ENCODE measurements at regions of chr1 and their contacts with region 1.

Region 1: DNA sequence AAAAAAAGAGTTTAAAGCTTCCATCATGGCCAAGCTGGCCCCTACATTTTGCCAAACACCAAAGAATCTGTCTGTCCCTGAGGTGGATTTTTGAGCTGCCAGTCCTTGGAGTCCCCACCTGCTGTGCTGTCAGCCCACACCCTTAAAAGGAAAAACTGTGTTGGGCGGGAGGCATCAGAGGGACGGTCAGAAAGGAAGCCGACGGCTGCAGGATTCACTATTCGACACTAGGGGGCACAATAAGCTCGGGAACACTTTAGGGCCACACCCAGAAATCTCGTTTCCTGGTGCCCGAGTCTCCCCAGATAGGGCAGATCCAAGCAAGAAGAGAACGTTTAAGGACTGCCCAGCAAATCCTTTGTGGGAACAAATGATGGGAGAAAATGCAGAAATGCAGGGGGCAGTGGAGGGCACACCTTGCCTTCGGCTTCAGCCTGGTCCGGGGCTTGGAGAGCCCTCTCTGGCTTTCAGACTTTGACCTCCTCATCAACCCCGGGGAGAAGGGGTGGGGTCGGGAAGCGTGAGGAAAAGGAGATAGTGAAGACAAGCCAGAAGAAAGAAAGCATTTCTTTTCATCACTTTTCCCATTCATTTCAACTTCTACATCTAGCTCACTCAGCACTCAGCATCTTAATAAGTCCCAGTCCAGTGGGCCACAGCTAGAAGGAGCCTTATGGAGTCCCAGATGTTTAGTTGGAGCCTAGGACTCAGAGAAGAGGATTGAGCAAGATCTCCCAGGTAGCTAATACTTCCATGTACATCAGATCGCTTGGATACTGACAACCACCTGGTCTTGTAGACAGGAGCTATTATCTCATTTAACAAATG is 5.0 kb upstream of the CTTNBP2NL start:
- DNase-seq: peak; percentile 63
- ATAC-seq: peak; percentile 81
- H3K4me3 ChIP-seq: peak overlapping the region; percentile 79
- H3K27ac ChIP-seq: no peak overlapping the region
- H3K4me1 ChIP-seq: peaks cover 18% of the 10 kb centered on the region
- H3K27me3 ChIP-seq: no peaks in the 10 kb centered on the region
- CTCF ChIP-seq: peak; percentile 88 to 96 (median 95)
- EP300 ChIP-seq: no peak
- POLR2A ChIP-seq: no peak
- RAD21 ChIP-seq: peak; percentile 94

Region 2: GRCh38 chr1:112369392-112370285 is 21.4 kb before region 1 on chr1:
- CTCF ChIA-PET with region 1: interaction called, 24 read pairs
- POLR2A ChIA-PET with region 1: interaction called, 4 read pairs
- RAD21 ChIA-PET with region 1: interaction called, 6 read pairs
- SMC1A ChIA-PET with region 1: interaction called, 3 read pairs
- in situ Hi-C with region 1: no loop called
- intact Hi-C with region 1: no loop called
- DNase-seq: no peak
- ATAC-seq: peak; percentile 100
- H3K4me3 ChIP-seq: no peak overlapping the region
- H3K27ac ChIP-seq: no peak overlapping the region
- H3K4me1 ChIP-seq: no peaks in the 10 kb centered on the region
- H3K27me3 ChIP-seq: no peaks in the 10 kb centered on the region; a peak in 2 of 4 replicates
- CTCF ChIP-seq: peak; percentile 96 to 99 (median 99); a peak in 5 of 6 replicates
- EP300 ChIP-seq: no peak
- POLR2A ChIP-seq: no peak
- RAD21 ChIP-seq: peak; percentile 80

Region 3: GRCh38 chr1:112429749-112430148 is 38.8 kb after region 1 on chr1:
- CTCF ChIA-PET with region 1: interaction called, 11 read pairs
- POLR2A ChIA-PET with region 1: no interaction called
- RAD21 ChIA-PET with region 1: interaction called, 3 read pairs
- SMC1A ChIA-PET with region 1: interaction called, 5 read pairs
- in situ Hi-C with region 1: no loop called
- intact Hi-C with region 1: no loop called
- DNase-seq: no peak
- ATAC-seq: no peak
- H3K4me3 ChIP-seq: no peak overlapping the region
- H3K27ac ChIP-seq: no peak overlapping the region
- H3K4me1 ChIP-seq: no peaks in the 10 kb centered on the region
- H3K27me3 ChIP-seq: no peaks in the 10 kb centered on the region
- CTCF ChIP-seq: no peak
- EP300 ChIP-seq: no peak
- POLR2A ChIP-seq: no peak
- RAD21 ChIP-seq: no peak

Region 4: GRCh38 chr1:112501810-112502641 is 111.0 kb after region 1 on chr1:
- CTCF ChIA-PET with region 1: interaction called, 25 read pairs
- POLR2A ChIA-PET with region 1: interaction called, 4 read pairs
- RAD21 ChIA-PET with region 1: interaction called, 25 read pairs
- SMC1A ChIA-PET with region 1: interaction called, 20 read pairs
- in situ Hi-C with region 1: no loop called
- intact Hi-C with region 1: no loop called
- DNase-seq: no peak
- ATAC-seq: peak; percentile 78
- H3K4me3 ChIP-seq: peak overlapping the region; percentile 50; the same call in 1 of the 2 replicates
- H3K27ac ChIP-seq: no peak overlapping the region
- H3K4me1 ChIP-seq: no peaks in the 10 kb centered on the region
- H3K27me3 ChIP-seq: peaks cover 3 to 5% of the 10 kb centered on the region in 2 experiments; a peak in 2 of 4 replicates
- CTCF ChIP-seq: peak; percentile 73 to 89 (median 77)
- EP300 ChIP-seq: no peak
- POLR2A ChIP-seq: no peak
- RAD21 ChIP-seq: peak; percentile 63

Region 5: DNA sequence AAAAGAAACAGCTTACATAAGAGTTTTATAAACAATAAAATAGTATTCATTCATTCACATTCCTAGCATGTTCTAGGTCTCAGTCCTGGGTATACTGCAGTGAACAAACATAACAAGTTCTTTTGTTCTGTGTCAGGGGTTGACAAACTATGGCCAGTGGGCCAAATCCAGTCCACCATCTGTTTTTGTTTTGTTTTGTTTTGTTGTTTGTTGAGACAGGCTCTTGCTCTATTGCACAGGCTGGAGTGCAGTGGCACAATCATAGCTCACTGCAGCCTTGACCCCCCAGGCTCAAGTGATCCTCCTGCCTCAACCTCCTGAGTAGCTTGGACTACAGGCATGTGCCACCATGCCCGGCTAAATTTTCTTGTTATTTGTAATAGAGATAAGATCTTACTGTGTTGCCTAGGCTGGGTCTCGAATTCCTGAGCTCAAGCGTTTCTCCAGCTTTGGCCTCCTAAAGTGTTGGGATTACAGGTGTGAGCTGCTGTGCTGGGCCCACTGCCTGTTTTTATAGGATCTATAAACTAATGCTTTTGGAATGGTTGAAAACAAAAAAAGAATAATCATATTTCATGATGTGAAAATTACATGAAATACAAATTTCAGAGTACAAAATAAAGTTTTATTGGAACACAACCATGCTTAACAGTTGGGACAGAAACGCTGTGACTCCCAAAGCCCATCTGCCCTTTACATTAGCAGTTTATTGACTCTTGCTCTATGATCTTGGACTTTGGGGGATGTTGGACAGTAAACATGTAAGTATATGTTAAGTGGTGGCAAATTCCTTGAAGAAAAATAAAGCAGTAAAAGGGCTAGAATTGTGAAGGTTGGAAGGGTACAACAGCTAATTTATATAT is 246.5 kb after region 1 on chr1:
- CTCF ChIA-PET with region 1: interaction called, 13 read pairs
- POLR2A ChIA-PET with region 1: no interaction called
- RAD21 ChIA-PET with region 1: interaction called, 7 read pairs
- SMC1A ChIA-PET with region 1: interaction called, 8 read pairs
- in situ Hi-C with region 1: no loop called
- intact Hi-C with region 1: no loop called
- DNase-seq: no peak
- ATAC-seq: no peak
- H3K4me3 ChIP-seq: no peak overlapping the region
- H3K27ac ChIP-seq: peak overlapping the region; percentile 48; the same call in 1 of the 2 replicates
- H3K4me1 ChIP-seq: peaks cover 27% of the 10 kb centered on the region
- H3K27me3 ChIP-seq: no peaks in the 10 kb centered on the region
- CTCF ChIP-seq: no peak
- EP300 ChIP-seq: no peak
- POLR2A ChIP-seq: no peak
- RAD21 ChIP-seq: no peak

Region 6: GRCh38 chr1:112803906-112804762 is 413.1 kb after region 1 on chr1:
- CTCF ChIA-PET with region 1: interaction called, 21 read pairs
- POLR2A ChIA-PET with region 1: no interaction called
- RAD21 ChIA-PET with region 1: interaction called, 8 read pairs
- SMC1A ChIA-PET with region 1: no interaction called
- in situ Hi-C with region 1: loop called (anchors 5 kb)
- intact Hi-C with region 1: loop called (anchors 2 kb)
- DNase-seq: peak; percentile 4
- ATAC-seq: peak; percentile 99
- H3K4me3 ChIP-seq: no peak overlapping the region
- H3K27ac ChIP-seq: no peak overlapping the region
- H3K4me1 ChIP-seq: peaks cover 4% of the 10 kb centered on the region; the same call in 1 of the 2 replicates
- H3K27me3 ChIP-seq: peaks cover 0 to 4% of the 10 kb centered on the region in 2 experiments; a peak in 1 of 4 replicates
- CTCF ChIP-seq: peak; percentile 88 to 95 (median 89)
- EP300 ChIP-seq: no peak
- POLR2A ChIP-seq: no peak
- RAD21 ChIP-seq: peak; percentile 92

Measured in GM12878 (cell line).